Activated CD8-positive, alpha-beta memory T cell treated with anti-CD3 and anti-CD28 coated beads, Interleukin-2, amount 10 ng/mL, durations not matched to agents 7 days and 5 days (primary cell): ENCODE measurements at regions of chr12 and their contacts with region 1.

Region 1: DNA sequence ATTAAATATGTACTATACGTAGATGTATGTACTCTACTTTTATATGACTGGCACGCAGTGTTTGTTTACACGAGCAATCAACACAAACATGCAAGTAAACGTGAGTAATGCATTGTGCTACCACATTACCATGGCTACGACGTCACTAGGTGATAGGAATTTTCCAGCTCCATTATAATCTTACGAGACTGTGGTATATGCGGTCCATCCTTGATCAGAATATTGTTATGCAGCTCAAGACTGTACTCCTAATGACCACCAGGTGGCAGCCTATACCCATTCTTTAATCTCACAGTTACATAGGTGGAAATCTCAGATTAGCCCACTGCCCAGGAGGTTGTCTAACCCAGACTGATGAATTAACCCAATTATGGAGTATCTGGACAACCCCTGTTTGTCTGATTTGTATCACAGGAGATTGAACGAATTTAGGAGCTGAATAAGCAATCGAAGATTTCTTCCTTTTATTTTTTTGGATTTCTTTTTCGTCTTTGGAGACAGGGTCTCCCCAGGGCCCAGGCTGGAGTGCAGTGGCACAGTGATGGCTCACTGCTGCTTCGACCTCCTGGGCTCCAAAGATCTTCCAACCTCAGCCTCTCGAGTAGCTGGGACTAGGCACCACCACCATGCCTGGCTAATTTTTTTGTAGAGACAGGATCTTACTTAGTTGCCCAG is 8.7 kb upstream of the TESPA1 start:
- DNase-seq: peak; percentile 68
- ATAC-seq: peak; percentile 75
- H3K4me3 Mint-ChIP-seq: no peak overlapping the region
- H3K27ac Mint-ChIP-seq: no peak overlapping the region
- H3K4me1 Mint-ChIP-seq: peaks cover 37% of the 10 kb centered on the region
- H3K27me3 Mint-ChIP-seq: no peaks in the 10 kb centered on the region

Region 2: GRCh38 chr12:54701940-54702592 is 291.2 kb before region 1 on chr12:
- CTCF ChIA-PET with region 1: interaction called, 15 read pairs
- DNase-seq: no peak
- ATAC-seq: peak; percentile 51
- H3K4me3 Mint-ChIP-seq: no peak overlapping the region
- H3K27ac Mint-ChIP-seq: no peak overlapping the region
- H3K4me1 Mint-ChIP-seq: no peaks in the 10 kb centered on the region
- H3K27me3 Mint-ChIP-seq: peaks cover 19% of the 10 kb centered on the region

Region 3: GRCh38 chr12:54740882-54741281 is 252.4 kb before region 1 on chr12:
- CTCF ChIA-PET with region 1: interaction called, 10 read pairs
- DNase-seq: no peak
- ATAC-seq: peak; percentile 66
- H3K4me3 Mint-ChIP-seq: peak overlapping the region; percentile 43
- H3K27ac Mint-ChIP-seq: peak overlapping the region; percentile 79
- H3K4me1 Mint-ChIP-seq: peaks cover 57% of the 10 kb centered on the region
- H3K27me3 Mint-ChIP-seq: no peaks in the 10 kb centered on the region

Region 4: DNA sequence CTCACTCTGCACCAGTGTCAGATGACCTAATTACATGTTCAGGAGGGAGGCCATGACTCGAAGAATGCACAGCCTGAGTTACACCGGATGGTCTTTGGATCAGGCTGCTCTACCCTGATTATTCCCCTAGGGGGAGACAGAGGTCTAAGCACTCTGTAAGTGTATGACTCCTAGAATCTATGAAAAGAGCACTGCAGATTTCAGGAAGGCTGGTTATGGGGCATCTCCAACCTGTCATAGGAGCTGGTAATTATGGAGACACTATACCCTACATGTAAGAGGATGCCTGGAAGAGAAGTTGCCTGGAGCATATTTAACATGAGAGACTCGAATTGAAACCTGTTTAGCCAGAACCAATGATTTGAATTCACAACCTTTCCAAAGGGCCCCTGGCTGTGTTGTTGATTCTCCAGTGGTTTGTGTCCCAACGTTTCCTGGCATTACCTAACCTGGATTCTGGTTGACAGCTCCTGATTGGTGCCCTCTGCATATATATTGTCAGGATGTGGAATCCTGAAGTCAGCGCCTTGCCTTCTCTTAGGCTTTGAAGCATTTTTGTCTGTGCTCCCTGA is 139.2 kb before region 1 on chr12 and contains the start of gene MUCL1:
- CTCF ChIA-PET with region 1: interaction called, 20 read pairs
- DNase-seq: peak; percentile 84
- ATAC-seq: peak; percentile 100
- H3K4me3 Mint-ChIP-seq: no peak within 1 kb of the TSS
- H3K27ac Mint-ChIP-seq: no peak within 1 kb of the TSS
- H3K4me1 Mint-ChIP-seq: peaks cover 6% of the 10 kb centered on the region
- H3K27me3 Mint-ChIP-seq: no peaks in the 10 kb centered on the region
- total RNA-seq, gene MUCL1: not detected

Region 5: GRCh38 chr12:54977155-54977554 is 16.1 kb before region 1 on chr12:
- CTCF ChIA-PET with region 1: interaction called, 34 read pairs
- DNase-seq: no peak
- ATAC-seq: no peak
- H3K4me3 Mint-ChIP-seq: no peak overlapping the region
- H3K27ac Mint-ChIP-seq: peak overlapping the region; percentile 42
- H3K4me1 Mint-ChIP-seq: peaks cover 69% of the 10 kb centered on the region
- H3K27me3 Mint-ChIP-seq: no peaks in the 10 kb centered on the region